ENCODE measurements at regions of chr10 and their contacts with region 1.

Region 1: GRCh38 chr10:47361293-47361692 is 13.1 kb downstream of the RBP3 start:
- DNase-seq: no peak
- H3K4me3 ChIP-seq: no peak overlapping the region
- H3K27me3 ChIP-seq: peaks cover 3% of the 10 kb centered on the region
- CTCF ChIP-seq: peak; percentile 84

Region 2: DNA sequence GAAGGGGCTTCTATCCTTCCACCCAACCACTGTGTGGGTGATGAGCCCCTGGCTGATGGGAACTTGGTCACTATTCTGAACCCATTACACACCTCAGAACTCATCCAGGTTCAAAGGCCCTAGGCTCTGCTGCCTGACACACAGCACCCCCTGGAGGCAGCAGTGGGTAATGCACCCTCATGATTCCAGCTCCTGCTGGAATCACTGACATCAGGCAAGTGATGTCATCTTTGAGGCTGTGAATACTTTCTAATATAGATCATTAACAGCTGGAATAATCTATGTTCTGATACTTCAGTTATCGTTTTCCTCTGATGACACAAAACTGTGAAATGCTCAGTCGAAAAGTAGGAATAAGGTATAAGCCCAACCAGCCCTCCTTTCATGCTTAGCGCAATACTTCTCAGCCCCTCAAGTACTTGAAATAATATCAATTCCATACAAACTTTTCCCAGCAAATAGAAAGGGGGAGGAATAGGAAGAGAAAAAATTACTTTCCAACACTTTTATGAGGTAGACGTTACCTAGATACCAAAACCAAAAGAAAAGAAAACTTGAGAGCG is 20.6 kb before region 1 on chr10:
- CTCF ChIA-PET with region 1: interaction called, 17 read pairs
- POLR2A ChIA-PET with region 1: no interaction called
- DNase-seq: no peak
- H3K4me3 ChIP-seq: no peak overlapping the region
- H3K27me3 ChIP-seq: peaks cover 10% of the 10 kb centered on the region
- CTCF ChIP-seq: peak; percentile 97

Region 3: DNA sequence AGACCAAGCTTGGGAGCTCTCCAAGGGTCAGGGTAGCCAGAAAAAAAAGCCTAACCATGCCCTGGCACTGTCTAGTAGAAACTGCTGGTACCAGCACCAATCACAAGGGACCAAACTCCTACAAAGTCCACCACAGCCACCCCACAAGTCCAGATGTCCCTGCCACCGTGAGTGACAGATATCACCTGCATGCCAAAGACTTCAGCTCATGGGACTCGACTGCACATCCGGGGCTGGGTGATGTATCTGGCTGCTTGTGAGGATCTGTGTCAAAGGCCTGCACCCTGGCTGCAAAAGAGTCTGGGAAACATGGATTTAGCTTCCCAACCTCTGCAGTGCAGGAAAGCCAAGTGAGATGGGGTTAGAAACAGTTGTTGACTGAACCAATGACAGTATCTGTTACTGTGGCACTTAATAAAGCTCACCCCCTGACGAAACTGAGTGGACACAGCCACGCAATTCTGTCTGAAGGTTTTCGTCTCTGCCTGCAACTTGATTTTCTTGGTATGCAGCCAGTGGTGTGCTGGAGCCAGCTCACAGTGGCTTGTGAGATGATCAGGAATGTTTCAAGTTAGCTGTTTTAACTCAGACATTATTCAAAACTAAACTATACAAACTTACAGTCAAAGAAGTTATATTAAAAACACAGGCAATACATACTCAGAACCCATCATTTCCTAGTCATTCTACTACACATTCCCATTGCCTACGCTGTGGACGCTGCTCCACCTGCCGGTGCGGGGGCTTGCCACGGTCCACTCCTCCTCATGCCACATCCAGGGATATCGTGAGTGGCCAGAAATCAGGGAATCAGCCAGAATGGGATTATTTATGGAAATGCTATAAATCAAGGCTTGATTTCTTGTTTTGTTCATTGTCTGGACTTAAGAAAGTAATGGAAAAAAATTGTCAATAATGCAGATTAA is 13.6 kb after region 1 on chr10:
- CTCF ChIA-PET with region 1: interaction called, 37 read pairs
- POLR2A ChIA-PET with region 1: no interaction called
- DNase-seq: no peak
- H3K4me3 ChIP-seq: no peak overlapping the region
- H3K27me3 ChIP-seq: peaks cover 23% of the 10 kb centered on the region
- CTCF ChIP-seq: no peak

Region 4: GRCh38 chr10:47384148-47384921 is 23.0 kb after region 1 on chr10 and contains the start of gene ZNF488:
- CTCF ChIA-PET with region 1: interaction called, 12 read pairs
- POLR2A ChIA-PET with region 1: no interaction called
- DNase-seq: no peak
- H3K4me3 ChIP-seq: peak within 1 kb of the TSS; percentile 85
- H3K27me3 ChIP-seq: peaks cover 5% of the 10 kb centered on the region
- CTCF ChIP-seq: no peak
- polyA plus RNA-seq, gene ZNF488: 0.15 and 0.17 TPM in 2 replicates

Region 5: GRCh38 chr10:47423476-47423875 is 62.2 kb after region 1 on chr10:
- CTCF ChIA-PET with region 1: no interaction called
- POLR2A ChIA-PET with region 1: no interaction called
- DNase-seq: no peak
- H3K4me3 ChIP-seq: no peak overlapping the region
- H3K27me3 ChIP-seq: 0 out of 2 replicates have a peak, but pooled peaks cover 2% of the 10 kb centered on the region
- CTCF ChIP-seq: no peak

Measured in BJ (cell line).